Endothelial cell of umbilical vein (primary cell): ENCODE measurements at regions of chr17 and their contacts with region 1.

Region 1: GRCh38 chr17:17919169-17920107 is 52.8 kb downstream of the TOM1L2 start:
- DNase-seq: peak; percentile 78
- H3K4me3 ChIP-seq: no peak overlapping the region
- H3K27ac ChIP-seq: peak overlapping the region; percentile 12
- H3K4me1 ChIP-seq: peaks cover 28% of the 10 kb centered on the region
- H3K27me3 ChIP-seq: no peaks in the 10 kb centered on the region
- CTCF ChIP-seq: peak; percentile 78 to 81
- POLR2A ChIP-seq: no peak

Region 2: DNA sequence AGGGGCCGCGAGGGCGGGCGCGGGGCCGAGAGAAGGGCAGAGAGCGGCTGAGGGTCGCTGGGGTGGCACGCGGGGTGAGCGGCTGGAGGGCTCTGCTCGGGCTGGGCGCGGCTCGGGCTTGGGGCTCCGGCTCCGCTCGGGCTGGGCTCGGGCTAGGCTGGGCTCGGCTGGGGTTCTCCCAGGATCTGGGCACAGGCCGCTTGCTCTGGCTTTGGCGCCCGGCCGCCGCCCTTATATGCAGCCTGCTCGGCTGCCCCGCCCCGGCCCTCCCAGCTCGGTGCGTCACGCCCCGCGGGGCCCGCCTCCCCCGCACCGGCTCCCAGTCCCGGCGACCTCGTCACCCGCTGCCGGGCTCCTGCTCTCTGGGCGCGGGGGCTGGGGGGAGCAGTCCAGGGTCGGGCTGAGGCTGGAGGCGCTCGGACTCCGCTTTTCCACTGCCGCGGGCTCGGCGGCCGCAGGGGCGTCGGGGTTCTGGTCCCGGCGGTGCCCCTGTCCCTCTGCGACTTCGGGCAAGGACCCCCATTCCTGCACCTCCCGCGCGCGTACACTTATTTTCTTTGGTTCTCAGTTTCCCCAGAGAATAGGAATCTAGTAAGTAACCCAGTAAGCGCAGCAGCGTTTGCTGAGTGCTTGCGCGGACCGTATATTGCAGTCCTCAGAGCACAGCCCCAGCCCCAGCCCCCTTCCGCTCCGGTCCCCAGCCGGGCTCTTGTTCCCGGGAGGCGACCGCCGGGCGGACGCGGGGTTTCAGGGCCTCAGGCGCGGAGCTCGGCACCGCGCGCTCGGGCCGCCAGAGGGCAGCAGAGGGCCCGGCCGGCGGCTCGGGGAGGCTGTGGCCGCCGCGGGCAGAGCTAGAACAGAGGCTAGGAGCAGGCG is 423.0 kb before region 1 on chr17 and contains the start of gene RASD1:
- CTCF ChIA-PET with region 1: no interaction called
- POLR2A ChIA-PET with region 1: no interaction called
- dilution Hi-C with region 1: no loop called
- intact Hi-C with region 1: loop called (anchors 10 kb)
- DNase-seq: peak; percentile 77
- H3K4me3 ChIP-seq: peak within 1 kb of the TSS; percentile 39 to 74 (median 71)
- H3K27ac ChIP-seq: peak within 1 kb of the TSS; percentile 71
- H3K4me1 ChIP-seq: peaks cover 13% of the 10 kb centered on the region
- H3K27me3 ChIP-seq: no peaks in the 10 kb centered on the region
- CTCF ChIP-seq: peak; percentile 79 to 93
- POLR2A ChIP-seq: peak; percentile 91
- total RNA-seq, gene RASD1: 15.7 and 21.3 TPM in 2 replicates

Region 3: DNA sequence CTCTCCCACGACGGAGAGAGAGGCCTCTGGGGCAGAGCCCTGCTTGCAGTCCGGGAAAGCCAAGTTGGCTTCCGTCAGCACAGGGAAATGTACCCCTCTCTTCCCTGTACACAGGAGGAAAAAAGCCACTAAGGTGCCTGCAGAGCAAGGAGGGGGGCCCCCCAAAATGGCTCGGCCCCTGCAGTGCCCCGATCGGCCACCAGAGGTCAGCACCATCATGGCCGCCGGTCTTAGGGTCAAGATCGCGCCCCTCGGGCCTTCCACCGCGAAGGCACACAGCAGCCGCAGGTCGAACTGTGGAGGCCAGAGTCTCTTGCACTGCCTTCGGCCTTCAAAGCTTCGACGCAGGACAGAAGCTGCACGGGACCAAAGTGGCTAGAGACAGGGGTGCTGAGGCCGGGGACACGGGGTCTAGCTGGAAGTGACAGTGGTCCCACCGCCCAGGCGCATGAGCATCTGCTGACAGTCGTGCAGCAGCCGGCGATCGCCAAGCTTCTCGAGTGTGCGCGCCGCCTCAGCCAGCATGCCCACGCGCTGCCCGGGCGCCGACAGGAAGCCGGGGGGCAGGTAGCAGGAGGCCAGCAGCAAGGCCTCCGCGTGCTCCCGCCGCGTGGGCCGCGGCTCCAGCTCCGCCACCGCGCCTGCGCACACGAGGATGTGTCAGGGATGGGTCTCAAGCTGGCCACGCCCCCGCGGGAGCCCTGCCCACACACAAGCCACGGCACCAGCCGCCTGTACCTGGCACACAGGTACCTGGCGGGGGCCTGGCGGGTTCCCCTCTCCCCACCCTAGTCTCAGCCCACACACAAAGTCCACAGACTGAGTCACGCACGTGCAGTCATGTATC is 107.0 kb before region 1 on chr17:
- CTCF ChIA-PET with region 1: interaction called, 11 read pairs
- POLR2A ChIA-PET with region 1: no interaction called
- dilution Hi-C with region 1: no loop called
- intact Hi-C with region 1: loop called (anchors 1 kb)
- DNase-seq: peak; percentile 68
- H3K4me3 ChIP-seq: no peak overlapping the region
- H3K27ac ChIP-seq: no peak overlapping the region
- H3K4me1 ChIP-seq: peaks cover 3% of the 10 kb centered on the region
- H3K27me3 ChIP-seq: no peaks in the 10 kb centered on the region
- CTCF ChIP-seq: peak; percentile 95 to 96
- POLR2A ChIP-seq: no peak

Region 4: DNA sequence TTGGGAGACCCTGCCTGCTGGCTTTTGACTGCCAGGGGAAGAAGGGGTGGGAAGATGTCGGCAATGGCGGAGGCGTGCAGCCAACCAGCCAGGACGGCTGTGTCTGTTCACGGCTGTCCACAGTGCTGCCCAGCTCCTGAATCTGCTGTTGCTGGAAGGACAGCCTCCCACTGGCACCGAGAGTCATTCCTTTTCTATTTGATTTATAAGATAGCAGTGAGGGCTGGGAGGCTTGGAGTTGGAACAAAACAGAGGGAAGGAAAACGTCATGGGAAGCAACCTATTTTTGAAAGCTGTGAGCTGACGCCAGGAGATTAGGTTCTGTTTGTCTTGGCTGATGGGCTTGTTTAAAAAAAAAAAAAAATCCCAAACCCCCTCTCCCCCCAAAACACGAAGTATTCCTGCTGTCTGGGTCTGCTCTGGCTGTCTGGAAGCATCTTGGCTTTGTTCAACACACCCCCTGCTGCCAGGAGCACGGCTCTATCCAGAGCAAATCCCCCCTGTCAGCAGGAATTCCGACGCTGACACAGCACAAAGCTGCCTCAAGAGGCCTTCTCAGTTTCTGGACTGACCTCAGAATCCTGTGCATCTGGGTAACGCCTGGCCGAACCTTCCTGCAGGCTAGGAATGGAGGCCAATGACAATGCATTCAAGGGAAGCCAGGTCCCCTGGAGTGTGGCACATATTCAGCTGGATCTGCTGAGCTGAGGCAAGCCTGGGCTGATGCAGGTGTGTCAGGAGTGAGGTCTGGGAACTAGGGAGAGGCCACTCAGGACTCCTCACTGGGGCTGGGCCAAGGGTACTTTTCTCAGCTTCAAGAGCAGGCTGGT is 41.7 kb before region 1 on chr17:
- CTCF ChIA-PET with region 1: interaction called, 24 read pairs
- POLR2A ChIA-PET with region 1: no interaction called
- dilution Hi-C with region 1: no loop called
- intact Hi-C with region 1: loop called (anchors 5 kb)
- DNase-seq: peak; percentile 98
- H3K4me3 ChIP-seq: peak overlapping the region in 1 of 3 experiments; percentile 4
- H3K27ac ChIP-seq: peak overlapping the region; percentile 81
- H3K4me1 ChIP-seq: peaks cover 29% of the 10 kb centered on the region
- H3K27me3 ChIP-seq: no peaks in the 10 kb centered on the region
- CTCF ChIP-seq: peak in 1 of 2 donors; percentile 23
- POLR2A ChIP-seq: peak; percentile 20

Region 5: GRCh38 chr17:17900615-17901520 is 18.6 kb before region 1 on chr17:
- CTCF ChIA-PET with region 1: interaction called, 44 read pairs
- POLR2A ChIA-PET with region 1: interaction called, 3 read pairs
- dilution Hi-C with region 1: no loop called
- intact Hi-C with region 1: loop called (anchors 2 kb)
- DNase-seq: peak; percentile 89
- H3K4me3 ChIP-seq: no peak overlapping the region
- H3K27ac ChIP-seq: no peak overlapping the region
- H3K4me1 ChIP-seq: peaks cover 17% of the 10 kb centered on the region
- H3K27me3 ChIP-seq: no peaks in the 10 kb centered on the region
- CTCF ChIP-seq: no peak
- POLR2A ChIP-seq: no peak

Region 6: DNA sequence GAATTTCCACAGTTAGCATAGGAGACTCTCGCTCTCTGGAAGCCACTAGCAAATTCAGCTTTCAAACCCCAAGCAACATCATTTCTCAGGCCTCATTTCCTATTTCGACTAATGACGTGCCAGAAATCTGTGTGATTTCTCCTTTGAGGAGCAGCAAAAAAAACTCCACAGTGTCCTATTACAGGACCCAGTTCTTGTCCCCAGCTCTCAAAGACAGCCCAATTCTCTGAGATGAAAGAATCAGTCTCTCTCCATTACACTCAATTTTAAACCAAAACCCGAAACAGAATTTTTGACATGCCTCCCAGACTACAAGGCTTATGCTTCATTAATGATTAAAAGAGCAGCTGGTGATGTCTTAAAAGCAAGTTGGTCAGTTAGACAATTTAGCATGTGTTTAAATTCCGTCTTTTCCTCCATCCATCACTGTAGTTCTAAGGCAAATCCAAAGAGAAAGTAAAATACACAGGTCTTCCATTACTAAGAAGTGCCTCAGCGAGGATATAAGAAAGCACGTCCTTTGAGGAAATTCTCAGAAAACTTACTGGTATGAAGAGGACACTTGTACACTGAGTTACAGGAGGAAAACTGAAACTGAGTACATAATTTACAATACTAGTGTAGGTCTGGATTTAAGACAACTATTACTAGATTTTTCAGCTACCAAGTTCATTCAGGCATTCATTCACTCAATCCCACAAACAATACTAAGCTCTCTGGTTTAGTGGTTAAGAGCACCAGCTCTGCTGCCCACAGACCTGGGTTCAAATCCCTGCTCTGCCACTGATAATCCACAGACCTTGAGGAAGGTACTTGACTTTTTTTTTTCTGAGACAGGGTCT is 40.3 kb after region 1 on chr17:
- CTCF ChIA-PET with region 1: interaction called, 14 read pairs
- POLR2A ChIA-PET with region 1: no interaction called
- dilution Hi-C with region 1: no loop called
- intact Hi-C with region 1: loop called (anchors 2 kb)
- DNase-seq: peak; percentile 55
- H3K4me3 ChIP-seq: peak overlapping the region in 1 of 3 experiments; percentile 14
- H3K27ac ChIP-seq: peak overlapping the region; percentile 80
- H3K4me1 ChIP-seq: peaks cover 28% of the 10 kb centered on the region
- H3K27me3 ChIP-seq: no peaks in the 10 kb centered on the region
- CTCF ChIP-seq: no peak
- POLR2A ChIP-seq: no peak

Region 7: DNA sequence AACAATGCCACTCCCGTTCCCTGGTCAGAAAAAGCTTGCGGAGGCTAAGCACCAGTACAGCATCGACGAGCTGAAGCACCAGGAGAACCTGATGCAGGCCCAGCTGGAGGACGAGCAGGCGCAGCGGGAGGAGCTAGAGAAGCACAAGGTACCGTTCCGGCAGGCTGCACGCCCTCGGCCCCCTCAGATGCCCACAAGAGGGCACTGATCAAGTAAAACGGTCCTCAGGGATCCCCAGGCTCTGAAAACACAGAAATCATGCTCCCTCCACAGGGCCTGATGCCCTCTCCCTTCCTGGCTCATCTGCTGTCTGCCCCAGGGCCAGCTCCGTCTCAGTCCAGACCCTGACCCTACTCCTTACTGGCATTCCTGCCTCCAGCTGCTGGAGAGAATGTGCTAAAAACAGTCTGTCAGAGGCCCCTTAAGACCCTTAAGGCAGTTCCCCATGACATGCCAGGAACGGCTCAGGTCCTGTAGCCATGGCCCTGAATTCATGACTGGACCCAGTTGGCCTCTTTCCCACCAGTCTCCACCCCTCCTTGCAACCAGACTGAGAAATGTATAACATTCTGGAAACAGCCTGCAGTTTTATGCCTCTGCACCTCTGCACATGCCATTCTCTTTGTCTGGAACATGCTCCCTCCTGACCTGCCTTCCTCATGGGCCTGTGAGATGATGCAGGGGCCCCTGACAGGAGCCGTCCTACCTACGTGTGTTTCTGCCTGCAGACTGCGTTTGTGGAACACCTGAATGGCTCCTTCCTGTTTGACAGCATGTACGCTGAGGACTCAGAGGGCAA is 75.0 kb after region 1 on chr17:
- CTCF ChIA-PET with region 1: no interaction called
- POLR2A ChIA-PET with region 1: no interaction called
- dilution Hi-C with region 1: no loop called
- intact Hi-C with region 1: no loop called
- DNase-seq: peak; percentile 31
- H3K4me3 ChIP-seq: no peak overlapping the region
- H3K27ac ChIP-seq: no peak overlapping the region
- H3K4me1 ChIP-seq: no peaks in the 10 kb centered on the region
- H3K27me3 ChIP-seq: no peaks in the 10 kb centered on the region
- CTCF ChIP-seq: peak; percentile 29 to 66
- POLR2A ChIP-seq: no peak

Region 8: DNA sequence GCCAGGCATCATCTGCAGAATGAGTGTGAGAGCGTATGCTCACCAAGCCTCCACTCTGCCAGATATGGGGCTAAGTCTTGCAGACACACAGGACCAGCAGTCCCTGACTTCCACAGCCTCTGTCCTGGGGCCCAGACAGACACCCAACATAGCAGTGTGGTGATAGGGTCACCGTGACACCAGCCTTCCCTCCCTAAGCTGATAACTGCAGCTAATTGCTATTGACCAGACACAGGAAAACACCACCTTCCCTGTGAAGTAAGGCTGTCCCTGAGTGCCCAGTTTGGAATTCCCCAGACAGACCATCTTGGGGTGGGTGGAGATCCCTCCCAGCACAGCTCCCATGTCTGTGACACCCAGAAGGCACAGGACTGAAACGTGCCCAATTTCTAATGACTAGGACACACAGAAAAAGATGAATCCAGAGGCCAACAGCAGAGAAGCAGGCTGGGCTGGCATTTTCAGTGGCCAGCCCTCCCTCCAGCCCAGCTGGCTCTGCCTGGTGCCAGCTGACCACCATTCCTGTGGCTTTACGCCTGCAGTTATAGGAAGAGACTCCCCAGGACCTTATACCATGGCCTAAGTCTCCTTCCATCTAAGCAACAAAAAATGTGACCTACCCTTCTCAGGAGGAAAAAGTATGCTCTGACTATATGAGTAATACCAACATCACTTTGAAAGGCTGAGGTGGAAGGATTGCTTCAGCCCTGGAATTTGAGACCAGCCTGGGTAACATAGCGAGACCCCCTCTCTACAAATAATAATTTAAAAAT is 89.2 kb after region 1 on chr17:
- CTCF ChIA-PET with region 1: no interaction called
- POLR2A ChIA-PET with region 1: no interaction called
- dilution Hi-C with region 1: no loop called
- intact Hi-C with region 1: no loop called
- DNase-seq: no peak
- H3K4me3 ChIP-seq: no peak overlapping the region
- H3K27ac ChIP-seq: no peak overlapping the region
- H3K4me1 ChIP-seq: no peaks in the 10 kb centered on the region
- H3K27me3 ChIP-seq: no peaks in the 10 kb centered on the region
- CTCF ChIP-seq: no peak
- POLR2A ChIP-seq: no peak